Activated T-helper 1 cell treated with anti-CD3 and anti-CD28 coated beads, Interleukin-12 subunit alpha, Interleukin-12 subunit beta, Interleukin-2, Interleukin-4 antibody, amounts not matched to agents 30 ng/mL and 10 ng/mL and 1 ng/mL, durations not matched to agents 14 hours and 24 hours and 36 hours (primary cell): ENCODE measurements at regions of chr10 and their contacts with region 1.

Region 1: DNA sequence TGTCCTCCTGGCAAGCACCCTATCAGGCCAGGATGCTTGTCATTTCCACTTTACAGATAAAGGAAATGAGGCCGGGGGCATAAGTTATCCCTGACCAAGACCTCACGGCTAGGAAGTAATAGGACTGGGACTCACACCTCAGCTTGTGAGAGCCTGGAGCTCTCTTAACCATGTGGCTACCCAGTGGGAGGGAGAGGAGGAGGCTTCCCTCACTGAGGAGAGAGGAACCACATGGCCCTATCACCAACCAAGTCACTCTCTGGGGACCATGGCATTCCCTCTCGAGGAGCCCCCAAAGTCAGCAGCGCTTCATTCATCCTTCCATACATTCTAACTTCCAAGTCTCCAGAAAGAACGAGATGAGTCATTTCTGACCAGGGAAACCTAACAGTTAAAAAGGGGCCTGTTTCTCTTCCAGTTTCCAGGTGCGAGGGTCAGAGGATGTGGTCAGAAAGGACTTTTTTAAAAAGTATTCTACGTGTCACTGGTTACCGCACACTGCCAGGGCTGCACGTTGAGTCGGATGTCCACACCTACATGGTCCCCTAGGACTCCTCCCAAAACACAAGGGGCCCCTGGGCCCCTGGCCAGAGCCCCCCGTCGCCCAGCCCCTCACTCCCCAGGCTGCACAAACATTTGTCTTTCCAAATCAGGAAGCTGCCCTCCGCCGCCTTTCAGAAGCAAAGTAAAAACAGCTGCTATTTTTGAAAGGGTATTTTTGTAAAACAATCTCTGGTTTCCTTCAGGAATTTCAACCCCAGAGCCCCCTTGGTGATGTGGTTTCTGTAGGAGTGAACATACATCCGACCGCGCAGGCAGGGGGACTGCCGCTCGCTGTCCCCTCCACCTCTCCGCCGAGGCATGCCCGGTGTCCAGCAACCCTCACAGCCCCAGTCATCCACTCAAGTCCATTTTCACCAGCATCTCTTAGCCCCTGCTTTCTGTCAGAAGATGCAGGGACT is 128.2 kb upstream of the CHST15 start:
- DNase-seq: no peak
- H3K4me3 Mint-ChIP-seq: no peak overlapping the region
- H3K27ac Mint-ChIP-seq: peak overlapping the region; percentile 58
- H3K4me1 Mint-ChIP-seq: peaks cover 25% of the 10 kb centered on the region
- H3K27me3 Mint-ChIP-seq: peaks cover 13% of the 10 kb centered on the region

Region 2: GRCh38 chr10:123870260-123870659 is 351.4 kb before region 1 on chr10:
- intact Hi-C with region 1: no loop called
- DNase-seq: no peak
- H3K4me3 Mint-ChIP-seq: no peak overlapping the region
- H3K27ac Mint-ChIP-seq: no peak overlapping the region
- H3K4me1 Mint-ChIP-seq: no peaks in the 10 kb centered on the region
- H3K27me3 Mint-ChIP-seq: no peaks in the 10 kb centered on the region

Region 3: GRCh38 chr10:124043310-124044142 is 178.1 kb before region 1 on chr10:
- intact Hi-C with region 1: loop called (anchors 5 kb)
- DNase-seq: no peak
- H3K4me3 Mint-ChIP-seq: no peak overlapping the region
- H3K27ac Mint-ChIP-seq: peak overlapping the region; percentile 13
- H3K4me1 Mint-ChIP-seq: peaks cover 22% of the 10 kb centered on the region
- H3K27me3 Mint-ChIP-seq: peaks cover 29% of the 10 kb centered on the region

Region 4: GRCh38 chr10:124092860-124093773 is 128.5 kb before region 1 on chr10 and contains the start of gene CHST15:
- intact Hi-C with region 1: loop called (anchors 10 kb)
- DNase-seq: no peak
- H3K4me3 Mint-ChIP-seq: peak within 1 kb of the TSS; percentile 65
- H3K27ac Mint-ChIP-seq: no peak within 1 kb of the TSS
- H3K4me1 Mint-ChIP-seq: no peaks in the 10 kb centered on the region
- H3K27me3 Mint-ChIP-seq: peaks cover 61% of the 10 kb centered on the region
- total RNA-seq, gene CHST15: 0.15 and 0.18 TPM in 2 replicates